Dorsolateral prefrontal cortex (tissue), 120 donors: ENCODE measurements at regions of chr3 and their contacts with region 1.

Region 1: DNA sequence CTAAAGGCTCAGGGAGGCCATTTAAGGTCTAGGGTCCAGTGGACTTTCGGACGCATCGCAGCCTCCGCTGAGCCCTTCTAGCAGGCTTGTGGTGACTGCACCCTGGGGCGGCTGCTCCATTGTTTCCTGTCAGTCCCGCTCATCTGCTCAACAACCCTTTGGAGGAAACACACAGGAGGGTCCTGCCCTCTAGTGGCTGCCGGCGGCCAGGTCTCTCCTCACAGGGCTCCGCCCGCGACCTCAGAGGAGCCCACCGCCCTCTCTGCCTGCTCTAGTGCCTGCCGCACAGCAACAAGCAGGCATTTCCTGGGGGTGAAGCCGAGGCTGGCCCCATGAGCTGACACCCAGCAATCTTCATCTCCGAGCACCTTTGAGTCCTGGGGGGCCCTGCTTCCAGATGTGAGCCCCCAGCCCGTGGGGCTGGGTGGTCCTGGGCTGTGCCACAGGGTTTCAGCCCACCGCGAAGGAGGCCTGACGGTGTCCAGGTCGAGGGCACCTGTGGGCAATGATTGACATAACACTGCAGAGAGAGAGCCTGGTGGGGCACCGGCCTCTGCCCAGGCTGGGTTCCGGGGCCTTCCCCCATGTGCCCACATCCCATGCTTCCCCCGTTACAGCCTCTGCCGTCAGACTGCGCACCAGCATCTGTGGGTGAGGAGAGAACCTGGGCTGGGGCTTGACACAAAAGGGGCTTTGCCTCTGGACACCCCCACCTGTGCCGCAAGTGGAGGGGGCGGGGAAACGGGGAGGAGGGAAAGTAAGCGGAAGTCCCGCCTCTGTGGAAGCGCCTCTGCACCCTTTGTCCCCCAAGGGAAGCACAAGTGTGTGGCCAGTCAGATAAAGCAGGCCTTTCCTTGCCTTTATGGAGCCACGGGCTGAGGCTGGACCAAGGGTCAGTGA is 27.0 kb upstream of the SFMBT1 start:
- DNase-seq: peak; percentile 67 to 87 (median 80)
- H3K4me3 ChIP-seq: peak overlapping the region; percentile 7 to 73 (median 54)
- H3K27ac ChIP-seq: peak overlapping the region in 40 of 59 donors; percentile 3 to 83 (median 58)
- H3K27me3 ChIP-seq: no peaks in the 10 kb centered on the region
- CTCF ChIP-seq: peak; percentile 50 to 95 (median 90)

Region 2: GRCh38 chr3:52742418-52743041 is 330.4 kb before region 1 on chr3:
- intact Hi-C with region 1: loop called in 1 of 2 experiments (anchors 5 kb)
- DNase-seq: no peak
- H3K4me3 ChIP-seq: no peak overlapping the region
- H3K27ac ChIP-seq: no peak overlapping the region
- H3K27me3 ChIP-seq: no peaks in the 10 kb centered on the region
- CTCF ChIP-seq: peak in 54 of 56 donors; percentile 21 to 67 (median 46)

Region 3: GRCh38 chr3:52845691-52846431 is 227.0 kb before region 1 on chr3:
- intact Hi-C with region 1: loop called (anchors 2 to 5 kb)
- DNase-seq: no peak
- H3K4me3 ChIP-seq: peak overlapping the region in 12 of 59 donors; percentile 3 to 47 (median 16)
- H3K27ac ChIP-seq: peak overlapping the region; percentile 25 to 93 (median 84)
- H3K27me3 ChIP-seq: no peaks in the 10 kb centered on the region
- CTCF ChIP-seq: peak in 53 of 56 donors; percentile 22 to 71 (median 55)

Region 4: GRCh38 chr3:52851348-52851747 is 221.6 kb before region 1 on chr3:
- intact Hi-C with region 1: loop called (anchors 2 to 5 kb)
- DNase-seq: peak in 1 of 10 donors; percentile 19
- H3K4me3 ChIP-seq: no peak overlapping the region
- H3K27ac ChIP-seq: peak overlapping the region in 2 of 59 donors; percentile 14 to 36
- H3K27me3 ChIP-seq: no peaks in the 10 kb centered on the region
- CTCF ChIP-seq: peak in 53 of 56 donors; percentile 25 to 76 (median 54)

Region 5: DNA sequence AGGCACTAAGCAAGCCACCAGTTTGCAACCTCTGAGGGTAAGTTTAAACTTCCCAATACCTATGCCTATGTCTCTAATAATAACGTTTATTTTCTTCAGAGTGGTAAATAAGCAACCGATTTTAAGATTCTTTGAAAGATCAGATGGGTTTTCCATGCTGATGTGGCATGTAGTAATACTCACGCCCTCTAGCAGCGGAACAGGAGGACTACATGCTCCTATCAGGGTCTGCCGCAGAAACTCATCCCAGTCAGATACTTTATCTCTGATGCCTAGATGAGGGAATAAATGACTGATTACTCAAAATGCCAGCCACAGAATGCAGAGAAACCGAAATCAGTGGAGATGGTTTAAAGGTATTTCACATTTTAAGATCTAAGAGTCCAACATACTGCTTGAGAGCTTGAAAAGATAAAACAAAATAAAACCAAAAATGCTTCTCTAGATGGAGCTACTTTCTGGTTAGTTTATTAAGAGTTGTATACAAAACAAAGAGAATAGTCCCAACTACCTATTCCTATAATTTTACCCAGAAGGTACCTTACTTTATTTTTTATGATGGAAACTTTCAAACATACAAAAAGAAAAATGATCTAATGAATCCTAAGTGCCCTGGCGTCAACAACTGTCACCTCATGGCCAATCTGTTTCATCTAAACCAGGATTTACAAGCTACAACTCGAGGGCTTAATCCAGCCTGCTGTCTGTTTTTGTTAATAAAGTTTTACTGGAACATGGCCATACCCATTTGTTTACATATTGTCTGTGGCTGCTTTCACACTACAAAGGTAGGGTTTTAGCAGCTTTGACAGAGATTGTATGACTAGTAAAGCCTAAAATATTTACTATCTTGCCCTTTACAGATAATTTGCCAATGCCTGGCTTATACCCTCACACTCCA is 138.0 kb before region 1 on chr3:
- intact Hi-C with region 1: loop called in 1 of 2 experiments (anchors 2 kb)
- DNase-seq: peak in 8 of 10 donors; percentile 41 to 68 (median 54)
- H3K4me3 ChIP-seq: no peak overlapping the region
- H3K27ac ChIP-seq: no peak overlapping the region
- H3K27me3 ChIP-seq: no peaks in the 10 kb centered on the region
- CTCF ChIP-seq: peak; percentile 40 to 82 (median 71)

Region 6: GRCh38 chr3:53045518-53046170 is 27.3 kb before region 1 on chr3 and contains the start of gene SFMBT1:
- intact Hi-C with region 1: loop called in 1 of 2 experiments (anchors 2 kb)
- DNase-seq: peak in 9 of 10 donors; percentile 33 to 70 (median 56)
- H3K4me3 ChIP-seq: peak within 1 kb of the TSS; percentile 66 to 95 (median 85)
- H3K27ac ChIP-seq: peak within 1 kb of the TSS; percentile 58 to 98 (median 94)
- H3K27me3 ChIP-seq: no peaks in the 10 kb centered on the region
- CTCF ChIP-seq: peak in 2 of 56 donors; percentile 5 to 9
- total RNA-seq, gene SFMBT1: 7.1 to 28.2 (median 13.3) TPM

Region 7: DNA sequence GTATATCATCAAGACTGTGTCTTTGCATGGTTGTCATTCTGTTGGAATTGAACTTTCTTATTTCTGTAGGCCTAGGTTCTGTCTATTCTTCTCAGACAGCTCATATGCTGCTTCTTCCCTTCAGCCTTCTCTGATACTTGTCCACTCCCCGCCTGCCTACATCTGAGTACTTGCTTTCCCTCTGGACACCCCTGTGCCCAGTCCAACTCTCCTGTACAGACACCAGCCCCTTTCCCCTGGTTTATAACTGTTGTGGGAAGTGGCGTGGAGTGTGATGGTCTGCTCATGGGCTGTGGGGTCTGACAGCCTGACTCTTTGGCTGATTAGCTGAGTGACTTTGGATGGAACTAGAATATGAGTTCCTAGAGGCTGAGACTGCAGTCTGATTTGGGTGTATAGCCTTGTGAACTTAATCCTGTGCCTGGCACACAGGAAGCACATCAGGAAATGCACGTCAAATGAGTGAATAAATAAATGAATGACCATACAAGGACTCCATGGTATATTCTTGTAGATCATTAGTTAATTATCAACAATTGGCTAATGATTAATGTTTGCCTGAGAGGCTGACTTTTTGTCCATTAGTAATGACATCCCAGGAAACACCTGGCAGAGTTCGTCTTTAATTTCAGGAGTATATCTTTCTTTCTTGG is 433.3 kb after region 1 on chr3:
- intact Hi-C with region 1: no loop called
- DNase-seq: no peak
- H3K4me3 ChIP-seq: no peak overlapping the region
- H3K27ac ChIP-seq: no peak overlapping the region
- H3K27me3 ChIP-seq: no peaks in the 10 kb centered on the region
- CTCF ChIP-seq: no peak